PC-3 (cell line): ENCODE measurements at regions of chr1 and their contacts with region 1.

Region 1: GRCh38 chr1:219555031-219555692 is 57.7 kb downstream of the ZC3H11B start:
- DNase-seq: peak; percentile 97
- ATAC-seq: peak; percentile 83
- H3K4me3 ChIP-seq: peak overlapping the region; percentile 30; the same call in 1 of the 2 replicates
- H3K27ac ChIP-seq: peak overlapping the region; percentile 89
- H3K4me1 ChIP-seq: peaks cover 23% of the 10 kb centered on the region
- H3K27me3 ChIP-seq: no peaks in the 10 kb centered on the region
- CTCF ChIP-seq: no peak

Region 2: GRCh38 chr1:219401724-219402625 is 153.2 kb before region 1 on chr1:
- CTCF ChIA-PET with region 1: no interaction called
- POLR2A ChIA-PET with region 1: no interaction called
- intact Hi-C with region 1: loop called (anchors 1 kb)
- DNase-seq: peak; percentile 17
- ATAC-seq: peak; percentile 39
- H3K4me3 ChIP-seq: no peak overlapping the region
- H3K27ac ChIP-seq: no peak overlapping the region
- H3K4me1 ChIP-seq: peaks cover 5% of the 10 kb centered on the region; the same call in 1 of the 2 replicates
- H3K27me3 ChIP-seq: no peaks in the 10 kb centered on the region
- CTCF ChIP-seq: no peak

Region 3: GRCh38 chr1:219442611-219443061 is 112.5 kb before region 1 on chr1:
- CTCF ChIA-PET with region 1: no interaction called
- POLR2A ChIA-PET with region 1: no interaction called
- intact Hi-C with region 1: loop called (anchors 1 kb)
- DNase-seq: peak; percentile 99
- ATAC-seq: peak; percentile 84
- H3K4me3 ChIP-seq: peak overlapping the region; percentile 23; the same call in 1 of the 2 replicates
- H3K27ac ChIP-seq: peak overlapping the region; percentile 81
- H3K4me1 ChIP-seq: peaks cover 48% of the 10 kb centered on the region
- H3K27me3 ChIP-seq: no peaks in the 10 kb centered on the region
- CTCF ChIP-seq: no peak

Region 4: DNA sequence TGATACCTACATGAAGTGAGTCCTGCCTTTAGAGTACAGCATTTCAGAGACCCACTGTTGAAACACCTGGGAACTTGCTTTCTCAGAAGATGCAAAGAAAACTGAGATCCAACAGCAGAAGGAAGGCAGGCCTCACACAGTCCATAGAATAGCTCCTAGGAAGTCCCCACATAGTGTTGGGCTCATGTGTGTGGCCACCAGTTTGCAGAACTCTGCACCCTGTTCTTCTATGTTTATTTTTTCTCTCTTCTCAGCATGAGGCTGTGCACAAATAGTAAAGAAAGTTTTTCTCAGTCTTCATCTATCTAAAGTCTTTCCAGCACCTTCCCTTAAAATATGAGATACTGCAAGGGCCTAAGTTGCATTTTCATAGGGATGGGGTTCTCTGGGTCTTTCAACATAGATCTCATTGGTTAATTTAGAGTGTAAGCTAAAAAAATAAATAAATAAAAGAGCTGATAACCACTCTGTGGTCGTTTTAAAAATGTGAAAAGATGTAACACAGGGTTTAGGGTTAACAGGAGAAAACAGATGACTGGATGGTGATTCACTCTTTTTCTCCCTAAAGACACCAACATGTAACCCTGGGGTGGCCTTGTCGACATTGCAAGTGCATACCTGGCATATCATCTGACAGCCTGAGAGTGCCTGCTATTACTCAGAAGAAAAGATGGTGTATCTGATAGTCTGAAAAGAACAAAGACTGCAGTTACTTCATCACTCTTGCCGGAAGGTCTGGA is 36.8 kb before region 1 on chr1:
- CTCF ChIA-PET with region 1: interaction called, 3 read pairs
- POLR2A ChIA-PET with region 1: no interaction called
- intact Hi-C with region 1: loop called (anchors 1 kb)
- DNase-seq: peak; percentile 98
- ATAC-seq: peak; percentile 91
- H3K4me3 ChIP-seq: no peak overlapping the region
- H3K27ac ChIP-seq: peak overlapping the region; percentile 80
- H3K4me1 ChIP-seq: peaks cover 42% of the 10 kb centered on the region
- H3K27me3 ChIP-seq: no peaks in the 10 kb centered on the region
- CTCF ChIP-seq: no peak